ENCODE measurements at regions of chr16 and their contacts with region 1.

Region 1: GRCh38 chr16:19717771-19718602 is at the starts of genes IQCK and KNOP1:
- DNase-seq: peak; percentile 93 to 96
- ATAC-seq: peak; percentile 96 to 98 (median 98)
- H3K4me3 ChIP-seq: peak within 1 kb of the TSS; percentile 87
- H3K27ac ChIP-seq: peak within 1 kb of the TSS; percentile 85
- H3K4me1 ChIP-seq: peaks cover 12% of the 10 kb centered on the region
- H3K27me3 ChIP-seq: no peaks in the 10 kb centered on the region
- CTCF ChIP-seq: no peak
- total RNA-seq, gene IQCK: 4.3 to 9.9 (median 7.3) TPM
- total RNA-seq, gene KNOP1: 5.9 to 9.7 (median 8.4) TPM

Region 2: GRCh38 chr16:19804538-19805323 is 86.7 kb after region 1 on chr16:
- intact Hi-C with region 1: loop called in 1 of 2 experiments (anchors 5 kb)
- DNase-seq: peak; percentile 50 to 66
- ATAC-seq: peak in 1 of 4 donors; percentile 25
- H3K4me3 ChIP-seq: no peak overlapping the region
- H3K27ac ChIP-seq: peak overlapping the region; percentile 53
- H3K4me1 ChIP-seq: peaks cover 28% of the 10 kb centered on the region
- H3K27me3 ChIP-seq: no peaks in the 10 kb centered on the region
- CTCF ChIP-seq: no peak

Region 3: DNA sequence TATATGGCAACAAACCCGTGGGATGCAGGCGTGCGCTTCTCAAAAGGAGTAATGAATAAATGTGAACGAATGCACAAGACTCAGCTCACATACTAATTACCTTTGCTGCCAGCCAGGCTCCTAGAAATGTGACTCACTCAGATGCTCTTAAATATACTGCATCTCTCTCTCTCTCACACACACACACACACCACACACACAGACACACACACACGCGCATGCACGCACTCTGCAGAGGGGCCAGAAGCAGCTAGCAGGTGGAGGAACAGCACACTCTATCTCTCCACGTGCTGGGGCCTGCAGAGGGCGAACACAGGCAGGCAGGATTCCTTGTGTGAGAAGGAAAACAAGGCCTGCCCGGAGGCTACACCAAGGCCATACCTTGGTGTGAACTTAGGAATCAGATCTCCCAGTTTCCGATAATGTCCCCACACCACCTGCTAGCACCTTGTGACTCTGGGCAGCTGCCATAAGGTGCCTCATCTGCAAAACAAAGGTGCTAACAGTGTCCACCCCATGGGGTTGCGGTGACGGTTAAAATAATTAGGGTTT is 161.3 kb after region 1 on chr16:
- intact Hi-C with region 1: loop called (anchors 5 kb)
- DNase-seq: peak in 1 of 2 donors; percentile 67
- ATAC-seq: peak in 3 of 4 donors; percentile 41 to 47 (median 42)
- H3K4me3 ChIP-seq: no peak overlapping the region
- H3K27ac ChIP-seq: peak overlapping the region; percentile 92
- H3K4me1 ChIP-seq: peaks cover 51% of the 10 kb centered on the region
- H3K27me3 ChIP-seq: no peaks in the 10 kb centered on the region
- CTCF ChIP-seq: no peak